ENCODE measurements at regions of chr16 and their contacts with region 1.

Region 1: DNA sequence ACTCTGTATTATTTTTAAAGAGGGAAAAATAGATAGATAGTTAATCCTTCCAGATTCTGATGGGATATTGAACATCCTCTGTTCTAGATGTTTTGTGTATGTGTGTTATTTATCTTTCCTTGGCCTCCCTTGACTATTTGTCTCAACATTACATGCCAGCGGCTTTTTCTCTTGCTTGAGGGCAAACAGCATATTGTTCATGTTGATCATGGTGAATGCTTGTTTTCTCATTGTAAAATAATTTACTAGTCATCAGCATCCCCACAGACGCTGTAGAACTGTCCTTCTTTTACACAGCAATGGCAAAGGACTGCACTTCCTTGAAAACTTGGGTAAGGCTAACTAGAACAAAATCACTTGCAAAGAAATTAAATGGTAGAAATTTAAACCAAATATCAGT is 1376.4 kb upstream of the GOT2 start:
- DNase-seq: no peak
- ATAC-seq: no peak

Region 2: GRCh38 chr16:59748531-59748930 is 362.0 kb before region 1 on chr16:
- intact Hi-C with region 1: no loop called
- DNase-seq: no peak
- ATAC-seq: no peak

Region 3: DNA sequence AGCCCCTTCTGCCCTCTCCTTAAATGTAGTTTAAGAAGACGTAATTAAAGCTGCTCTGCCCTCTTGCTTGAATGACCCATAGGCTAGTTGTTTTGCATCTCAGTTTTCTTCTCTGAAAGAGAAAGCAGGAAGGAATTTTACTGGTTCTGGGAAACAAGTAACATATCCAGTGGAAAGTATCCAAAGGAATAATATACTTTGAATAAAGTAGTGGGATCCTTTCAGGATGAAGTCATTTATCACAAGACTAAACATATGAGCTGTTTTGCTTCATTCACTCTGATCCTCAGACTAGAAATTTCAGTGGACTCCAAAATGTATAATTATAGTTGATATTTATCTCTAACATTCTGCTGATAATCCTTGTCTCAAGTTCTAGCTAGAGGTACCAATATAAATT is 78.8 kb before region 1 on chr16:
- intact Hi-C with region 1: loop called (anchors 10 kb)
- DNase-seq: no peak
- ATAC-seq: no peak

Measured in left ventricle myocardium superior (tissue), 1 donor.